ENCODE measurements at regions of chr10 and their contacts with region 1.

Region 1: DNA sequence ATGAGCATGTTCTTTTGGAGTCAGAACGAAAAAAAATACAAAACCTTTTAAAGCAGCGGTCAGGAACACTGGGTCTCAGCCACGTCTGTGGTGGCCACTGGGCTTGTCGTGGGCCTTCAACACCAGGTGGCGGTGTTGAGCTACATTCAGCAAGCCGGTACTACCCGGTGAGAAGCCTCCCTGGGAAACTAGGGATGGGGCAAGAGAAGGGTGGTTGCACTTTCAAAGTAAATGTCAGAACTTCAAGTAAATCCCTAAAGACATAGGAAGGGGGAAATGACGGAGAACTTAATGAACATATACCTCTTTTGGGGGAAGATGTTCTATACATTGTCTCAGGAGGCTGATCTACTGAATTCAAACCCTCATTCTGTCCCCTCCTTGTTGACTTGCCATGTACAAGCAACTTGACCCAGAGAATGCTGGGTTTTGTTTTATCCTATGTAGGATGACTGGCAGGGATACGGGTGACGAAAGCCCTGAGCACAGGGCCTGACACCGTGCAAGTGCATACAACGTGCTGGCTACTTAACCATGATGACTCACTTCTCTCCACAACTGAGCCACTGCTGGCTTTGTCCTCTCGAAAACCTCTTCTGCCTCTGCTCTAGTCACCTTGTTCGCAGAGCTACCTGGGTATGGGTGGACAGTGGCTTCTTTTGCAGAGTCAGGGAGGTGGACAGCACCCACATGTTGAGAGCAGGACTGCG is 49.0 kb upstream of the BAMBI start:
- DNase-seq: peak; percentile 16 to 58 (median 39)
- ATAC-seq: peak; percentile 85
- H3K4me3 ChIP-seq: no peak overlapping the region
- H3K4me3 Mint-ChIP-seq: no peak overlapping the region
- H3K27ac ChIP-seq: no peak overlapping the region
- H3K27ac Mint-ChIP-seq: no peak overlapping the region
- H3K4me1 ChIP-seq: no peaks in the 10 kb centered on the region
- H3K4me1 Mint-ChIP-seq: peaks cover 0 to 13% (median 5%) of the 10 kb centered on the region in 7 donors
- H3K27me3 ChIP-seq: no peaks in the 10 kb centered on the region
- H3K27me3 Mint-ChIP-seq: peaks cover 10 to 35% (median 20%) of the 10 kb centered on the region in 5 donors

Region 2: DNA sequence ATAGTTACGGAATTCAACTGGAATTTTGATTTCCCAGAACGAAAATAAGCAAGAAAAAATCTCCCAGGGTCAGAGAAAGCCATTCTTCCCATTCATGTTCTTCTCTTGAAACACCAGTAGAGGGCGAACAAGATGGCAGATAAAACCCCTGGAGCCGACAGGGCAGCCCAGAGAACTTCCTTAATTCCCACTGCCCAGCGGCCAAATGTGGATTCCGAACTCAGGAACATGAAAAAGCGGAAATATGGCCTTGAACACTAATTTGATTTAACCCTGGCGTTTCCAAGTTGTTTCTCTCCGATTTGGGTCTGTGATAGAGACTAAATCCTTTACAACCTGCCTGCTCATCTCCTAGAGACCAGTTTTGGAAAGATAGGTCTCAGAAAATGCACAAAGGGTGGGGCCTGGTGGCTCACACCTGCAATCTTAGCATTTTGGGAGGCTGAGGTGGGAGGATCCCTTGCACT is 196.1 kb before region 1 on chr10:
- CTCF ChIA-PET with region 1: no interaction called
- POLR2A ChIA-PET with region 1: no interaction called
- intact Hi-C with region 1: loop called (anchors 1 to 5 kb)
- DNase-seq: peak in 7 of 9 donors; percentile 11 to 45 (median 35)
- ATAC-seq: peak; percentile 83
- H3K4me3 ChIP-seq: no peak overlapping the region
- H3K4me3 Mint-ChIP-seq: peak overlapping the region in 9 of 10 donors; percentile 17 to 80 (median 57)
- H3K27ac ChIP-seq: no peak overlapping the region
- H3K27ac Mint-ChIP-seq: no peak overlapping the region
- H3K4me1 ChIP-seq: no peaks in the 10 kb centered on the region
- H3K4me1 Mint-ChIP-seq: peaks cover 4 to 9% (median 7%) of the 10 kb centered on the region in 7 donors
- H3K27me3 ChIP-seq: no peaks in the 10 kb centered on the region
- H3K27me3 Mint-ChIP-seq: peaks cover 0 to 7% (median 0%) of the 10 kb centered on the region in 5 donors

Region 3: GRCh38 chr10:28991326-28992270 is 363.3 kb after region 1 on chr10:
- CTCF ChIA-PET with region 1: no interaction called
- POLR2A ChIA-PET with region 1: no interaction called
- intact Hi-C with region 1: loop called in 1 of 2 experiments (anchors 1 kb)
- DNase-seq: peak in 5 of 9 donors; percentile 0 to 25 (median 11)
- ATAC-seq: peak; percentile 40
- H3K4me3 ChIP-seq: no peak overlapping the region
- H3K4me3 Mint-ChIP-seq: no peak overlapping the region
- H3K27ac ChIP-seq: no peak overlapping the region
- H3K27ac Mint-ChIP-seq: no peak overlapping the region
- H3K4me1 ChIP-seq: no peaks in the 10 kb centered on the region
- H3K4me1 Mint-ChIP-seq: no peaks in the 10 kb centered on the region
- H3K27me3 ChIP-seq: no peaks in the 10 kb centered on the region
- H3K27me3 Mint-ChIP-seq: peaks cover 0 to 20% (median 9%) of the 10 kb centered on the region in 5 donors

Region 4: GRCh38 chr10:29957907-29958356 is 1329.6 kb after region 1 on chr10:
- CTCF ChIA-PET with region 1: no interaction called
- POLR2A ChIA-PET with region 1: no interaction called
- intact Hi-C with region 1: no loop called
- DNase-seq: no peak
- ATAC-seq: no peak
- H3K4me3 ChIP-seq: no peak overlapping the region
- H3K4me3 Mint-ChIP-seq: no peak overlapping the region
- H3K27ac ChIP-seq: no peak overlapping the region
- H3K27ac Mint-ChIP-seq: no peak overlapping the region
- H3K4me1 ChIP-seq: no peaks in the 10 kb centered on the region
- H3K4me1 Mint-ChIP-seq: no peaks in the 10 kb centered on the region
- H3K27me3 ChIP-seq: no peaks in the 10 kb centered on the region
- H3K27me3 Mint-ChIP-seq: peaks cover 0 to 9% (median 0%) of the 10 kb centered on the region in 5 donors

Measured in naive thymus-derived CD4-positive, alpha-beta T cell (primary cell).